ENCODE measurements at regions of chr10 and their contacts with region 1.

Region 1: DNA sequence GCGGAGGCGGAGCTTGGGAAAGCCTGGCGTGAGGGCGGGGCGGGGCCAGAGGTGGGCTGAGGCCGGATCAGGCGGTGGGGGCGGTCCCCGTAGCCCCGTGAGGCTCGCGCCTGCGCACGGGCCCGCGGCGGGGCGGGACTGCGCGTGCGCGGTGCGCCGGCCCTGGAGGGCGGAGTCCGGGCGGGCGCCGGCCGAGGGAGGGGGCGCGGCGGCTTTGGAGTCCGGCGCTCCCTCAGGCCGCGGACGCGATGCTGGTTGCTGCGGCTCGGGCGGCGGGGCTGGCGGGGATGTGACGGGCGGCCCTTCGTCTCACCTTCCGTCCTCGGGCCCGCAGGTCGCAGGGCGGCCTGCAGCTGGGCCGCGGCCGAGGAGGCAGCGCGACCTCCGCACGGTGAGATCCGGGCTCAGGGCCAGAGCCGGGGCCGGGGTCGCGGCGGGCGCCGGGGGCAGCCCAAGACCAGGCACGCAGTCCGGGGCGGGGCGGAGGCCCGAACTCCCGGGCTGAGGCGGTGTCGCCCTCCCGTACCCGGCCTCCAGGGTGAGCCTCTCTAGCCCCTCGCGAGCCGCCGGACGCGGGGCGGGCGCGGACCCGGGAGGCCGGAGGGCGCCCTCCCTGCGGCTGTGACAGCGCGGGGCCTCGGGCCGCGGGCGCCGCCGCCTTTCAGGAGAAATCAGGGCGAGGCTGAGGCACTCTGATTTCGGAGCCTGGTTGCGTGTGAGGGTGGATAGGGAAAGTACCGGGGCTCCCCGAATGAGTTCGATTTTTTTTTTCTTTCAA is at the start of gene CCSER2:
- DNase-seq: peak; percentile 77 to 95 (median 86)
- ATAC-seq: peak; percentile 55
- H3K4me3 ChIP-seq: peak within 1 kb of the TSS; percentile 63
- H3K4me3 Mint-ChIP-seq: peak within 1 kb of the TSS; percentile 97
- H3K27ac ChIP-seq: peak within 1 kb of the TSS; percentile 75 to 92
- H3K27ac Mint-ChIP-seq: peak within 1 kb of the TSS; percentile 99
- H3K4me1 ChIP-seq: peaks cover 22% of the 10 kb centered on the region
- H3K4me1 Mint-ChIP-seq: peaks cover 35% of the 10 kb centered on the region
- H3K27me3 ChIP-seq: no peaks in the 10 kb centered on the region
- H3K27me3 Mint-ChIP-seq: no peaks in the 10 kb centered on the region
- CTCF ChIP-seq: no peak
- total RNA-seq, gene CCSER2: 134 to 148 TPM

Region 2: DNA sequence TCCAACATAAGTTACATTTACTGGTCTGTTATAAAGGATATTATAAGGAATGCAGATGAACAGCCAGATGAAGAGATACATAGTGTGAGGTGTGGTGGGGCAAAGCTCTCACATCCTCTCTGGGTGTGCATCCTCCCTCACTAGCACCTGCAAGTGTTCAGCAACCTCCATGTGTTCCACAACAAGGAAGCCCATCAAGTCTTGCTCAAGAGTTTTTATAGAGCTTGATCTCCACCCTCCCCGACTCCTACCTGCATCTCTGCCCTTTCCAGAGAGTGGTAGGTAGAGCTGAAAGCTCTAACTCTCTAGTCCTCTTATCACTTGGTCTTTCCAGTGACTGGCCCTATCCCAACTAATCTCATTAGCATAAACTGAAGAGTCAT is 201.8 kb before region 1 on chr10:
- CTCF ChIA-PET with region 1: no interaction called
- POLR2A ChIA-PET with region 1: no interaction called
- intact Hi-C with region 1: no loop called
- DNase-seq: no peak
- ATAC-seq: no peak
- H3K4me3 ChIP-seq: no peak overlapping the region
- H3K4me3 Mint-ChIP-seq: no peak overlapping the region
- H3K27ac ChIP-seq: no peak overlapping the region
- H3K27ac Mint-ChIP-seq: no peak overlapping the region
- H3K4me1 ChIP-seq: no peaks in the 10 kb centered on the region
- H3K4me1 Mint-ChIP-seq: no peaks in the 10 kb centered on the region
- H3K27me3 ChIP-seq: peaks cover 6 to 18% of the 10 kb centered on the region in 2 experiments
- H3K27me3 Mint-ChIP-seq: peaks cover 38% of the 10 kb centered on the region
- CTCF ChIP-seq: no peak

Region 3: GRCh38 chr10:84139126-84140035 is 189.2 kb before region 1 on chr10 and contains the start of gene GHITM:
- CTCF ChIA-PET with region 1: no interaction called
- POLR2A ChIA-PET with region 1: interaction called, 14 read pairs
- intact Hi-C with region 1: loop called in 1 of 2 experiments (anchors 2 kb)
- DNase-seq: peak; percentile 98 to 100 (median 99)
- ATAC-seq: peak; percentile 94
- H3K4me3 ChIP-seq: peak within 1 kb of the TSS; percentile 93
- H3K4me3 Mint-ChIP-seq: peak within 1 kb of the TSS; percentile 90
- H3K27ac ChIP-seq: peak within 1 kb of the TSS; percentile 95
- H3K27ac Mint-ChIP-seq: peak within 1 kb of the TSS; percentile 97
- H3K4me1 ChIP-seq: peaks cover 20% of the 10 kb centered on the region
- H3K4me1 Mint-ChIP-seq: peaks cover 30% of the 10 kb centered on the region
- H3K27me3 ChIP-seq: no peaks in the 10 kb centered on the region
- H3K27me3 Mint-ChIP-seq: no peaks in the 10 kb centered on the region
- CTCF ChIP-seq: peak; percentile 36
- total RNA-seq, gene GHITM: 64.7 to 67.9 TPM

Region 4: GRCh38 chr10:84341538-84341856 is 12.9 kb after region 1 on chr10:
- CTCF ChIA-PET with region 1: interaction called, 5 read pairs
- POLR2A ChIA-PET with region 1: interaction called, 11 read pairs
- intact Hi-C with region 1: no loop called
- DNase-seq: peak in 1 of 14 experiments; percentile 38
- ATAC-seq: peak; percentile 43
- H3K4me3 ChIP-seq: no peak overlapping the region
- H3K4me3 Mint-ChIP-seq: peak overlapping the region; percentile 30
- H3K27ac ChIP-seq: no peak overlapping the region
- H3K27ac Mint-ChIP-seq: no peak overlapping the region
- H3K4me1 ChIP-seq: peaks cover 37% of the 10 kb centered on the region
- H3K4me1 Mint-ChIP-seq: peaks cover 62% of the 10 kb centered on the region
- H3K27me3 ChIP-seq: no peaks in the 10 kb centered on the region
- H3K27me3 Mint-ChIP-seq: no peaks in the 10 kb centered on the region
- CTCF ChIP-seq: no peak

Region 5: GRCh38 chr10:84360637-84361365 is 32.2 kb after region 1 on chr10:
- CTCF ChIA-PET with region 1: interaction called, 7 read pairs
- POLR2A ChIA-PET with region 1: interaction called, 3 read pairs
- intact Hi-C with region 1: loop called in 1 of 2 experiments (anchors 1 kb)
- DNase-seq: no peak
- ATAC-seq: no peak
- H3K4me3 ChIP-seq: no peak overlapping the region
- H3K4me3 Mint-ChIP-seq: peak overlapping the region; percentile 26
- H3K27ac ChIP-seq: no peak overlapping the region
- H3K27ac Mint-ChIP-seq: peak overlapping the region; percentile 46
- H3K4me1 ChIP-seq: peaks cover 21% of the 10 kb centered on the region
- H3K4me1 Mint-ChIP-seq: peaks cover 90% of the 10 kb centered on the region
- H3K27me3 ChIP-seq: no peaks in the 10 kb centered on the region
- H3K27me3 Mint-ChIP-seq: no peaks in the 10 kb centered on the region
- CTCF ChIP-seq: no peak

Region 6: GRCh38 chr10:84440781-84441180 is 112.2 kb after region 1 on chr10:
- CTCF ChIA-PET with region 1: no interaction called
- POLR2A ChIA-PET with region 1: no interaction called
- intact Hi-C with region 1: no loop called
- DNase-seq: no peak
- ATAC-seq: no peak
- H3K4me3 ChIP-seq: no peak overlapping the region
- H3K4me3 Mint-ChIP-seq: no peak overlapping the region
- H3K27ac ChIP-seq: no peak overlapping the region
- H3K27ac Mint-ChIP-seq: no peak overlapping the region
- H3K4me1 ChIP-seq: no peaks in the 10 kb centered on the region
- H3K4me1 Mint-ChIP-seq: peaks cover 7% of the 10 kb centered on the region
- H3K27me3 ChIP-seq: no peaks in the 10 kb centered on the region
- H3K27me3 Mint-ChIP-seq: no peaks in the 10 kb centered on the region
- CTCF ChIP-seq: no peak